ENCODE measurements at regions of chr2 and their contacts with region 1.

Region 1: GRCh38 chr2:137947728-137948336 is 16.4 kb upstream of the HNMT start:
- DNase-seq: peak; percentile 85
- ATAC-seq: peak; percentile 74

Region 2: DNA sequence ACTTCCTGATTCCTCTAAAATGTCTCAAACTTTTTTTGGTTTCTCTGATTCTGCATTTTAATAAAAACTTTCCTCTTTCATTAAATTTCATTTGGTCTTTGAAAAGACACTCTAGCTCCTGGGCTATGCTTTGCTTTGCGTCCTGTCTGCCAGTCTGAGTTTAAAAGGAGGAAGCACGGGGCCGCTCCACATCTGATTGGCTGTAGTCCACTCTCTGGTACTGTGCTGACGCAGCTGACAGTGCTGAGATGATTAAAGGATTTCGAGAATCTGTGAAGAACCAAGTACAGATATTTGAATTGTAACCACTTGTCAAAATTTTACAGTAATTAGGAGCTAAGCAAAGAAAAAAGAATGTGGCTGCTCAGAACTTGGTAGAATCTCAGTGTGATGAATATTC is 183.2 kb before region 1 on chr2:
- intact Hi-C with region 1: no loop called
- DNase-seq: no peak
- ATAC-seq: no peak

Region 3: DNA sequence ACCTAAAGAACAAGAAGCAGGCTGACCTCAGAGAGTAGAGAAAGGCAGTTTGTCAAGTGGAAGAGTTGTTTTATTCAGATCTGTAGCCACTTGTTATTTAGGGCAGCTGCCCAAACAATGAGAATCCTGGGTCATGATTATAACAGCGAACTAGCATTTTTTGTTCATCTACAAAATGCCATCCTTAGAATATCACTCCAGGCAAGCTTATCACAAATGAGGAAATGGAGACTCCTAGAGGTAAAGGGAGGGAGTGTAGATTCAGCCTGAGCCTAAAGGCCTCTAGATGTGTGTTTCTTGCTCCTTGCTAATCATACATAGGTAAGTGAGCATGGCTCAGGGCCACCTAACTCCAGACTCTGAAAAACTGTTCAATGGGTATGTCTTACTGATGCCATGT is 142.5 kb after region 1 on chr2:
- intact Hi-C with region 1: loop called (anchors 10 kb)
- DNase-seq: no peak
- ATAC-seq: peak; percentile 52

Region 4: DNA sequence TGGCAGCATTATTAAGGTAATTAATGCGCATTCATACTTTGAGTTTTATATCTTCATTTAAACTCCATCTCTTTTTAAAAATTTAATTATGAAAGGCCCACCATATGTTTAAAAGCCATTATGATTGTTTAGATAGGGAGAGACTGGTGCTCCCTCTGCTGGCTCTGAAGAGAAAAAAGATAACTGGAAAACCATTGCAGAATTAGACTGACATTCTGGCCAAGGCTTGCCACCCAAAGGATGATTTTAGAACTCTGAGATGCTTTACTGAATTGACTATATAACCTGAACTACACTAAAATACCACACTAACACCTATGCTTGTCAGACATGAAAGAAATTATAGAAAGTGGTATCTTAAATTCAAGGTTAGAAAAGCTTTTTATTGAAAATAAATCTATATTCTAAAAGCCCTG is 426.2 kb after region 1 on chr2:
- intact Hi-C with region 1: loop called (anchors 5 kb)
- DNase-seq: no peak
- ATAC-seq: no peak

Measured in left ventricle myocardium superior (tissue), 1 donor.